GM10248 (cell line): ENCODE measurements at regions of chr2 and their contacts with region 1.

Region 1: GRCh38 chr2:176454893-176455811 is 185.9 kb downstream of the MTX2 start:
- DNase-seq: peak; percentile 55
- CTCF ChIP-seq: peak; percentile 84

Region 2: DNA sequence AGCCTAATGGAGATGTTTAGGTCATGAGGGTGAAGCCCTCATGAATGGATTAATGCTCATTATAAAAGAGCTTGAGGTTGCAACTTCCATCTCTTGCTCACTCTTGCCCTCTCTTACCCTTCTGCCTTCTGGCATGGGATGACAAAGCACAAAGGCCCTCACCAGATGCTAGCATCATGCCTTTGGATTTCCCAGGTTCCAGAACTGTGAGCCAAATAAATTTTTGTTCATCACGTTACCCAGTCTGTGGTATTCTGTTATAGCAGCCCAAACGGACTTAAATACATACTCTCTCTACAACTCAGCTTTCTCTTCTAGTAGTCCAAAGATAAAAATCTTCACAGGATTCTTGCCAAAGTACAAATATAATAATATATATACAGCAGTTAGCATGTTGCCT is 528.9 kb before region 1 on chr2:
- CTCF ChIA-PET with region 1: no interaction called
- POLR2A ChIA-PET with region 1: no interaction called
- DNase-seq: no peak
- CTCF ChIP-seq: no peak

Region 3: DNA sequence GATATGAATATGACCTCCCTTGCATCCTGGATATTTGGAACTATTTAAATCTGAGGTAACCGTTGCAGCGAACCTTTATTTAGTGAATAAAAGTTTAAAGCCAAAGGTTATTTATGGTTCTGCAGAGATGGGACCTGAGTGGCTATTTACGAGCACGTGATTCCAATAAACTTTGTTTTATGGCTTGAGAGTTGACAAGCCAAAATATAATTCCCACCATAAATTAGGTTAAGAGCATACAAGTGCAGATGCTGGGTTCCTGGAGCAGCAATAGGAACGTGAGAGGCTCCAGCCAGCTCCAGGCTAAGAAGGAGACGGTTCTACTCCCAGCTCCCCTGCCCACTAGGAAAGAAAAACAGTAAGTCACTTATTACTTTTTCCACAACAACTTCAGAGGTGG is 309.1 kb before region 1 on chr2:
- CTCF ChIA-PET with region 1: interaction called, 124 read pairs
- POLR2A ChIA-PET with region 1: no interaction called
- DNase-seq: no peak
- CTCF ChIP-seq: no peak

Region 4: DNA sequence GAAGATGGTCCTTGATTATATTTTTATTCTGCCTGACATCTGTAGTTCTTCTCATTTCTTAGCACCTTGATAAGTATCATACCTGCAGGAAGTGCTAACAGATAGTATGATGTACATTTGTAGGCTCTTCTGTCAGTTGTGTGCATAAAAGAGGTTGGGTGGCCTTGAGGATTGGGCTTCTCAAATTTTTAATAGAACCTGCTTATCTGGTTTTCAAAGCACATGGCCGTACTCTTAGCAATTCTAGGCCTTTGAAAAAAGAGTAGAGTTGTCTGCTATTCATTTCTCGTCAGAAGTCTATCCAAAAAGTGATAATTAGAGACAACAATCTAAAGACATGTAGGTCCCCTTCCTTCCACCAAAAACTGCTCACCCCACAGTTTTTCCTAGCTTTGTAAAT is 140.3 kb before region 1 on chr2:
- CTCF ChIA-PET with region 1: no interaction called
- POLR2A ChIA-PET with region 1: no interaction called
- DNase-seq: no peak
- CTCF ChIP-seq: no peak

Region 5: DNA sequence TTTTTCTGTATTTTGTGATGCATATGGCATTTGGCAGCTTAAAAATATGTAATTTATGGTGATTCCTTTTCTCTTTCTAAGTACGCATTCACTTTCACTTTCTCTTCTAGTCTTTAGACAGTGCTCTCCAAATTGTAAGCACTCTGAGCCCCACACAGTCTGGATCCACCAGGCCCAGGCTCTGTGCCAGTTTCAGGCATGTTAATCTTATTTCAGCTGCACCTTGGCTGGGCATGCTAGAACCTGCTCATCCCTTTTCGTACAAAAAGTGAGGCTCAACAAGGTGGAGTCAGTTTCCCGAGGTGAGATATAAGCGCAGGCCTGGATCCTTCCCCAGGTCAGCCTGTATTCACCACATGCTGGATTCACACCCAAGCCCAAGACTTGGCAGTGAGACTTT is 18.0 kb after region 1 on chr2:
- CTCF ChIA-PET with region 1: interaction called, 25 read pairs
- POLR2A ChIA-PET with region 1: no interaction called
- DNase-seq: peak; percentile 20
- CTCF ChIP-seq: no peak

Region 6: GRCh38 chr2:176488431-176488830 is 33.3 kb after region 1 on chr2:
- CTCF ChIA-PET with region 1: interaction called, 17 read pairs
- POLR2A ChIA-PET with region 1: no interaction called
- DNase-seq: no peak
- CTCF ChIP-seq: no peak

Region 7: GRCh38 chr2:176573612-176574483 is 118.7 kb after region 1 on chr2:
- CTCF ChIA-PET with region 1: no interaction called
- POLR2A ChIA-PET with region 1: no interaction called
- DNase-seq: no peak
- CTCF ChIP-seq: no peak